ENCODE measurements at regions of chr3 and their contacts with region 1.

Region 1: DNA sequence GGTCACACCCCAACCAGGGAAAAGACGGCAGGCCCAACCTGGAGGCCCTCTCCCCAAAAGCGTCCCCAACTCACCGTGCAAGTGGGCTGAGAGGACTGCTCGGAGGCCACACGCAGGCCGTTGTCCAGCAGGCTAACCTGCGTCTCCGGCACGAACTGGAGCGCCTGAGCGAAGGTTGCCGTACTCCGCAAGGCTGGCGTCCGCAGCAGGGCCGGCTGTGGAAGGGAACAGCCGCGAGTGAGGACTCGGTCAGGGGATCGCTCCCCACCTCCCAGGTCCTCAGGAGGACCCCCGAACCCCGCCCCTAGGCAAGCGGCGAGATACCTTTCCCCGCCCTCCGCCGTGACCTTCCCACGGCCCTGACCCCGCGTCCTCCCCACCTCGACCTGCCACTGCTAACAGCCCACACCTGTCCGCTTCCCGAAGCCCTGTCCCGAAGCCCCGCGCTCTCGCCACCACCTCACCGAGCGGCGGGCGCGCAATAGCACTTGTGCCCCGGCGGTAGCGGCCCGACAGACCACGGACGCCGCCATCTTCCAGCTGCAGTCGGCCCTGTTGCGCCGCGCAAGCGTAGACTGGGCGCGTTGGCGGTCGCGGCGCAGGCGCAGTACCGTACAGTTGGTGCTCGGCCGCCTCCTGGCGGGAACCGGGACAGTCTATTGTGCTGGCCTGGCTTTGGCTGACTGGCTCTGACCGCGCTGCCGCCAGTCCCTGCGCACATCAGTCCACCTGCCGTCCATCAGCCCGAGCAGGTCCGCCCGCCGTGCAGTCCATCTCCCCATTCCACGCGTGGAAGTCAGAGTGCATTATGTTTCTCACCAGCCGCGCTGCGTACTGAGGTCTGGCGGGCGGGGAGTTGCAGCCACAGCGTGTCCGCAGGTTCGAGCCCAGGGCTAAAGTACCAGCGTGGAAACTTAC is at the start of gene UQCRC1:
- DNase-seq: peak; percentile 90 to 96 (median 93)
- H3K4me3 ChIP-seq: peak within 1 kb of the TSS; percentile 70
- H3K27ac ChIP-seq: peak within 1 kb of the TSS; percentile 74
- H3K4me1 ChIP-seq: peaks cover 5% of the 10 kb centered on the region
- H3K27me3 ChIP-seq: no peaks in the 10 kb centered on the region
- CTCF ChIP-seq: peak; percentile 72 to 95 (median 94)
- EP300 ChIP-seq: no peak
- POLR2A ChIP-seq: peak; percentile 84
- total RNA-seq, gene UQCRC1: 102 to 153 (median 113) TPM

Region 2: GRCh38 chr3:50550079-50550741 is 1940.9 kb after region 1 on chr3:
- intact Hi-C with region 1: loop called in 1 of 4 experiments (anchors 10 kb)
- DNase-seq: peak; percentile 30 to 75 (median 62)
- H3K4me3 ChIP-seq: no peak overlapping the region
- H3K27ac ChIP-seq: no peak overlapping the region
- H3K4me1 ChIP-seq: no peaks in the 10 kb centered on the region
- H3K27me3 ChIP-seq: no peaks in the 10 kb centered on the region
- CTCF ChIP-seq: peak in 2 of 3 donors; percentile 26 to 36
- EP300 ChIP-seq: no peak
- POLR2A ChIP-seq: no peak

Measured in ovary (tissue), 10 donors.